Activated CD4-positive, alpha-beta T cell treated with anti-CD3 and anti-CD28 coated beads, Interleukin-2, amount 10 ng/mL, durations not matched to agents 24 days and 14 days (primary cell): ENCODE measurements at regions of chr2 and their contacts with region 1.

Region 1: DNA sequence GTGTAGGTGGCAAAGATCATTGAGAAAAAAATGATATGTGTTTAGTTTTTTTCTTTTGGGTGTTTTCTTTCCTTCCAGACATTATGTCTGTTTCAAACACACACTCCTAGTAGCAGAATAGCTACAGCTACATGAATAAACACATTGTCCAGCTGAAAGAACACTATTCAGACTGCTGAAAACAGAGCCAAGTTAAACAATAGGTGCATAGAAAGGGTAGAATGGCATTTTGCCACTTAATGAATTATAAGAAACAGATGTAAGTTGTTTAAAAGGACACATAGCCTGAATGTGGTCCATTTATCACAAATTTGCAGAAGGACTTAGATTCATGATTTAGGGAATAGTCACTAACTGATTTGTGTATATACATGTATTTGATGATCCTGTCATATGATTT is 20.1 kb downstream of the CTLA4 start:
- DNase-seq: no peak
- H3K4me3 Mint-ChIP-seq: no peak overlapping the region
- H3K27ac Mint-ChIP-seq: no peak overlapping the region
- H3K4me1 Mint-ChIP-seq: peaks cover 51% of the 10 kb centered on the region
- H3K27me3 Mint-ChIP-seq: no peaks in the 10 kb centered on the region

Region 2: DNA sequence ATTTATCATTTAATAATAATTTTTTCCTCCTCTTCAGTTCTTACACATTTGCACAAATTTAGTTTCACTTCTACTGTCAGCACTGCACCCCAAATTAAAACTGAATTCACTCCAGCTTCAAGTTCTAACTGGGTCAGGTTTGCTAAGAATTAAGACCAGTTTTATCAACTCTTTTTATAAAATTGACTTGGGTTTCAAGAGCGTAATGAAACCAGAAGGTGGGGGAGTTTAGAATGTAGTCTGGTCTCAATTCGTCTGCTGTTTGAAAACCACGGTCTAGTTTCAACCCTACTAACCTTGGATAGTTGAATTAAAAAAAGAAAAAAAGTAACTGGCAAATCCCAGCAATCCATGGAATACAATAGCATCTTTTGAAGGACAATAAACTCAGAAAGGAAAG is 34.4 kb before region 1 on chr2:
- intact Hi-C with region 1: loop called (anchors 1 kb)
- DNase-seq: no peak
- H3K4me3 Mint-ChIP-seq: peak overlapping the region; percentile 70
- H3K27ac Mint-ChIP-seq: peak overlapping the region; percentile 89
- H3K4me1 Mint-ChIP-seq: peaks cover 43% of the 10 kb centered on the region
- H3K27me3 Mint-ChIP-seq: no peaks in the 10 kb centered on the region